ENCODE measurements at regions of chr1 and their contacts with region 1.

Region 1: DNA sequence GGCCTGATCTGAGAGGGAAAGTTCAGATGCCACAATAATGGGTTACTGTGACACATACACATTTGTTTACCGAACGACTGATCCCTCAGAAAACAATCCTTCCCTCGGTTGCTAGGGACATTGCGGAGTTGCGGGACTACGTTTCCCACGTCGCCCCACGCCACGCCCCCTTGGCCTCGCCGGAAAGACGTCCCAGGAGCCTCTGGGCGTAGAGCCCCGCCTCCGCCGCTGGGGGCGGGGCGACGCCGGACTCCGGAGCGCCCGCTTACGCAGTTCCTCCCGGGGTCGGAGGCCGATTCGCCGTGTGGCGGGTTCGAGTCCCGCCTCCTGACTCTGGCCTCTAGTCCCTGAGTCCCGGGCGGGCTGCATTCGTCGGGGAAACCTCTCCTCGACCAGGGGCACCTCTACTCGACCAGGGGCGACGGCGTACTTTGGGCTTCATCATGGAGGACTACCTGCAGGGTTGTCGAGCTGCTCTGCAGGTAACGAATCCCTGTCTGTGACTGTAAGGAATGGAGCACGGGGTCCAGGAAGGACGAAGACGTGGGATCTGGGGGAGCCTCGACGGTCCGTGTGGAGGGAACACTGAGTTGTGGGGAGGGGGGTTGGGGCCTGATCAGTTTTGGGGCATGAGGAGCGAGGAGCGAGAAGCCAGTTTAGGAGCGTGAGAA is at the start of gene PRUNE1:
- DNase-seq: peak; percentile 99 to 100 (median 99)
- H3K4me3 ChIP-seq: peak within 1 kb of the TSS; percentile 73 to 88 (median 78)
- H3K4me3 Mint-ChIP-seq: peak within 1 kb of the TSS; percentile 97 to 98
- H3K27ac ChIP-seq: peak within 1 kb of the TSS; percentile 89 to 95
- H3K27ac Mint-ChIP-seq: peak within 1 kb of the TSS; percentile 98 to 99 (median 99)
- H3K4me1 ChIP-seq: peaks cover 53 to 59% of the 10 kb centered on the region in 2 donors
- H3K4me1 Mint-ChIP-seq: peaks cover 62% of the 10 kb centered on the region
- H3K27me3 ChIP-seq: no peaks in the 10 kb centered on the region
- H3K27me3 Mint-ChIP-seq: peaks cover 0 to 10% (median 0%) of the 10 kb centered on the region in 3 donors
- CTCF ChIP-seq: no peak
- polyA plus RNA-seq, gene PRUNE1: 8.4 to 22.8 (median 22.6) TPM

Region 2: GRCh38 chr1:150660584-150660983 is 347.7 kb before region 1 on chr1:
- intact Hi-C with region 1: no loop called
- DNase-seq: no peak
- H3K4me3 ChIP-seq: no peak overlapping the region
- H3K4me3 Mint-ChIP-seq: no peak overlapping the region
- H3K27ac ChIP-seq: no peak overlapping the region
- H3K27ac Mint-ChIP-seq: peak overlapping the region in 1 of 7 donors; percentile 62
- H3K4me1 ChIP-seq: no peaks in the 10 kb centered on the region
- H3K4me1 Mint-ChIP-seq: peaks cover 4% of the 10 kb centered on the region
- H3K27me3 ChIP-seq: no peaks in the 10 kb centered on the region
- H3K27me3 Mint-ChIP-seq: no peaks in the 10 kb centered on the region
- CTCF ChIP-seq: no peak

Region 3: GRCh38 chr1:150876119-150876454 is 132.2 kb before region 1 on chr1:
- intact Hi-C with region 1: loop called in 1 of 2 experiments (anchors 5 kb)
- DNase-seq: peak in 1 of 3 donors; percentile 24
- H3K4me3 ChIP-seq: peak overlapping the region; percentile 95 to 98 (median 98)
- H3K4me3 Mint-ChIP-seq: peak overlapping the region; percentile 86 to 93
- H3K27ac ChIP-seq: peak overlapping the region; percentile 81 to 91
- H3K27ac Mint-ChIP-seq: peak overlapping the region; percentile 90 to 97 (median 94)
- H3K4me1 ChIP-seq: peaks cover 35 to 42% of the 10 kb centered on the region in 2 donors
- H3K4me1 Mint-ChIP-seq: peaks cover 42% of the 10 kb centered on the region
- H3K27me3 ChIP-seq: no peaks in the 10 kb centered on the region
- H3K27me3 Mint-ChIP-seq: peaks cover 0 to 1% (median under 1%) of the 10 kb centered on the region in 3 donors
- CTCF ChIP-seq: no peak

Region 4: DNA sequence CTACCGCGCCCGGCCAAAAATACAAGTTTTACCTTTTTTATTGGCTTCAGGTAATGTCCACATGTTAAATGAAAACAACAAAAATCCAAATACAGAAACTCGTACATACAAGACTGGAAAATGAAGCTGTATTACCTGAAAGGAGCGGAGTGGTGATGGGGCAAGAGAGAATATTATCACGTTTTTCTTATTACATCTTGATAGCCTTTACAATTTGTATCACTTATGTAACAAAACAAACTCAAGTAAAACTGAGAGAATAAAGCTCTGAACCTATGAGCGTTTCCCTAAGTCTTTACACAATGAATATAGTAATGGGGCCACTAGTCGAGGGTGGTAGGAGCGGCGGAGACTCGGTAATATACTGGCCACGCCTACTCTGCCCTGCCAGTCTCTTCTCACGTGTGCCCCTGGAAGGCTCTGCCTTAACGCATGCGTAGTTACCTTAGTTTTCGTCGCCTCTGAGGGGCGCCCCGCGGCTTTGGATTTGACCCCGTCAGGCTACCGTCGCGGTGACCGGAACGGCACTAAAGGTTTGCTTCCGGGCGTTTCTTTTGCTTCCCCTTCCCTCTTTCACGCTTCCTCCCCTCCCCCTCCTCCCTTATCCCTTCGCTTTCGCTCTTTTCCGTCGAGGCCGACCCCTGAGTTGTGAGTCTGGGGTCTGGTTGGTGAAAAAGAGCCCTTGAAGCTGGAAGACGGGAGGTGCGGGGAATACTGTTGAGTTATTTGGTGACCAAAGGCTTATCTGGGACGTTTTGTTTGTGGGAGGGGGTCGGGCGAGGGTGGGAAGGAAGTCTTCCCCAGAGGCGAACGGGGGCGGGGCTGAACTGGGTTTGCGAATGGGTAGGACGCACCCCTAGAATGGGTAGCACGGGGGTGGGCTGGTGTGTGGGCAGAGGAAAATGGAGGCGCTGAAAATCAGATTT is 82.2 kb before region 1 on chr1 and contains the start of gene SETDB1:
- intact Hi-C with region 1: loop called in 1 of 2 experiments (anchors 5 kb)
- DNase-seq: peak; percentile 96 to 99 (median 98)
- H3K4me3 ChIP-seq: peak within 1 kb of the TSS; percentile 71 to 88 (median 75)
- H3K4me3 Mint-ChIP-seq: peak within 1 kb of the TSS; percentile 94 to 95
- H3K27ac ChIP-seq: peak within 1 kb of the TSS; percentile 83 to 92
- H3K27ac Mint-ChIP-seq: peak within 1 kb of the TSS; percentile 97 to 99 (median 99)
- H3K4me1 ChIP-seq: peaks cover 19 to 27% of the 10 kb centered on the region in 2 donors
- H3K4me1 Mint-ChIP-seq: peaks cover 27% of the 10 kb centered on the region
- H3K27me3 ChIP-seq: no peaks in the 10 kb centered on the region
- H3K27me3 Mint-ChIP-seq: peaks cover 0 to 3% (median 1%) of the 10 kb centered on the region in 3 donors
- CTCF ChIP-seq: no peak
- polyA plus RNA-seq, gene SETDB1: 13.9 to 69.4 (median 15.5) TPM

Region 5: DNA sequence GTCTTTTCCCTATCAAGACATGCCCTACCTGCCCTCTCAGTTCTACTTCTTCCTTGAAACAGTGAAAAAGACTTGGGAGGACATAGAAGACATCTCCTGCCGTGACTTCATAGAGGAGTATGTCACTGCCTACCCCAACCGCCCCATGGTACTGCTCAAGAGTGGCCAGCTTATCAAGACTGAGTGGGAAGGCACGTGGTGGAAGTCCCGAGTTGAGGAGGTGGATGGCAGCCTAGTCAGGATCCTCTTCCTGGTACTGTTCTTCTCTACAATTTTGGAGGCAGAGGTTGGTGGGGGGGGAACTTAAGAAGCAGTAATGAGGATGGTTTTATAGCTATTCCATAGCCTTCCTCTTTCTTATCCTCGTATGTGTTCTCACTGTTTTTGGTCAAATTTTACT is 63.5 kb before region 1 on chr1:
- intact Hi-C with region 1: no loop called
- DNase-seq: no peak
- H3K4me3 ChIP-seq: no peak overlapping the region
- H3K4me3 Mint-ChIP-seq: no peak overlapping the region
- H3K27ac ChIP-seq: no peak overlapping the region
- H3K27ac Mint-ChIP-seq: peak overlapping the region in 1 of 7 donors; percentile 21
- H3K4me1 ChIP-seq: no peaks in the 10 kb centered on the region
- H3K4me1 Mint-ChIP-seq: no peaks in the 10 kb centered on the region
- H3K27me3 ChIP-seq: no peaks in the 10 kb centered on the region
- H3K27me3 Mint-ChIP-seq: no peaks in the 10 kb centered on the region
- CTCF ChIP-seq: no peak

Region 6: GRCh38 chr1:150979092-150980056 is 29.0 kb before region 1 on chr1:
- intact Hi-C with region 1: loop called in 1 of 2 experiments (anchors 5 kb)
- DNase-seq: peak; percentile 81 to 92 (median 83)
- H3K4me3 ChIP-seq: peak overlapping the region; percentile 49 to 79 (median 67)
- H3K4me3 Mint-ChIP-seq: peak overlapping the region; percentile 74 to 93
- H3K27ac ChIP-seq: peak overlapping the region; percentile 81 to 87
- H3K27ac Mint-ChIP-seq: peak overlapping the region; percentile 91 to 100 (median 99)
- H3K4me1 ChIP-seq: peaks cover 48 to 50% of the 10 kb centered on the region in 2 donors
- H3K4me1 Mint-ChIP-seq: peaks cover 46% of the 10 kb centered on the region
- H3K27me3 ChIP-seq: no peaks in the 10 kb centered on the region
- H3K27me3 Mint-ChIP-seq: no peaks in the 10 kb centered on the region
- CTCF ChIP-seq: peak; percentile 100

Region 7: DNA sequence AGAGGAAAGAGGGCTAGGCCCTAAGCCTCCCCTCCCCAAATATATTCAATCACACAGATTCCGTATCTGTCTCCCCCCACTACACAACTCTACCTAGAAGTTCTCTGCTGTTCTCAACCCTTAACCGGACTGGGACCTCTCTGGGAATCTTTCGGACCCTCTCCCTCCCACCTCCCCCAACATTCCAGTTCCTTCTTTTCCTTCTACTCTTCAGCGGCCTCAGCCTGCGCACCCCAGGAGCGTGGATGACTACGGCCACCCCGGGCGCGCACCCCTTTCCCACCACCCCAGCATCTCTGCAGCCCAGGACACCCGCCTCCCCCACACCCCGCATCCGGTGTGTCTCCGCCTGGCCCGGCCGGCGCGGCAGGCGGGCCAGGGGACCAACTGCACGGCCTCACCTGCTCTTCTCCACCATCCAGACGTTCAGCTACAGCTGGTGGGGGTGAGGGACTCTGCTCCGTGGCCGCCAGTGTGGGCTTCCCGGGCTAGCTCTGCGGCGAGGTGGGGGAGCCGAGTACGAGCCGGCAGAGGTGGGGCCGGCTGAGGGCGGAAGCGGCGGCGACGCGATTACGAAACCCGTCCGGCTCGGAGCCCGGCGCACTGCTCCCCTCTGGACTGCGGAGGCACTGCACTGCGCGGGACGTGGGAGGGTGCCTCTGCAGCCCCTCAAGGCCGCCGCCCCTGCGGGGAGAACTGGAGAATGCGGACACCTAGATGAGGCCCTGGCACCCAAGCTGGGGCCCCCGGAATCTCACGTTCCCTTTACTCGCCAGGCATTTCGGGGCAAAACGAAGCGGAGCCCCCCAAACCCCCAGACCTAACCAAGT is 51.0 kb after region 1 on chr1 and contains the start of gene CDC42SE1:
- intact Hi-C with region 1: loop called in 1 of 2 experiments (anchors 5 kb)
- DNase-seq: peak; percentile 84 to 90 (median 89)
- H3K4me3 ChIP-seq: peak within 1 kb of the TSS; percentile 79 to 99 (median 99)
- H3K4me3 Mint-ChIP-seq: peak within 1 kb of the TSS; percentile 99
- H3K27ac ChIP-seq: peak within 1 kb of the TSS; percentile 93 to 94
- H3K27ac Mint-ChIP-seq: peak within 1 kb of the TSS; percentile 98 to 100 (median 99)
- H3K4me1 ChIP-seq: peaks cover 42 to 50% of the 10 kb centered on the region in 2 donors
- H3K4me1 Mint-ChIP-seq: peaks cover 51% of the 10 kb centered on the region
- H3K27me3 ChIP-seq: no peaks in the 10 kb centered on the region
- H3K27me3 Mint-ChIP-seq: peaks cover 2 to 5% (median 3%) of the 10 kb centered on the region in 3 donors
- CTCF ChIP-seq: peak; percentile 98
- polyA plus RNA-seq, gene CDC42SE1: 62.1 to 302 (median 75.7) TPM

Region 8: GRCh38 chr1:151085953-151086559 is 77.7 kb after region 1 on chr1:
- intact Hi-C with region 1: no loop called
- DNase-seq: no peak
- H3K4me3 ChIP-seq: no peak overlapping the region
- H3K4me3 Mint-ChIP-seq: no peak overlapping the region
- H3K27ac ChIP-seq: no peak overlapping the region
- H3K27ac Mint-ChIP-seq: no peak overlapping the region
- H3K4me1 ChIP-seq: peaks cover 9 to 11% of the 10 kb centered on the region in 2 donors
- H3K4me1 Mint-ChIP-seq: peaks cover 9% of the 10 kb centered on the region
- H3K27me3 ChIP-seq: no peaks in the 10 kb centered on the region
- H3K27me3 Mint-ChIP-seq: no peaks in the 10 kb centered on the region
- CTCF ChIP-seq: no peak

Region 9: DNA sequence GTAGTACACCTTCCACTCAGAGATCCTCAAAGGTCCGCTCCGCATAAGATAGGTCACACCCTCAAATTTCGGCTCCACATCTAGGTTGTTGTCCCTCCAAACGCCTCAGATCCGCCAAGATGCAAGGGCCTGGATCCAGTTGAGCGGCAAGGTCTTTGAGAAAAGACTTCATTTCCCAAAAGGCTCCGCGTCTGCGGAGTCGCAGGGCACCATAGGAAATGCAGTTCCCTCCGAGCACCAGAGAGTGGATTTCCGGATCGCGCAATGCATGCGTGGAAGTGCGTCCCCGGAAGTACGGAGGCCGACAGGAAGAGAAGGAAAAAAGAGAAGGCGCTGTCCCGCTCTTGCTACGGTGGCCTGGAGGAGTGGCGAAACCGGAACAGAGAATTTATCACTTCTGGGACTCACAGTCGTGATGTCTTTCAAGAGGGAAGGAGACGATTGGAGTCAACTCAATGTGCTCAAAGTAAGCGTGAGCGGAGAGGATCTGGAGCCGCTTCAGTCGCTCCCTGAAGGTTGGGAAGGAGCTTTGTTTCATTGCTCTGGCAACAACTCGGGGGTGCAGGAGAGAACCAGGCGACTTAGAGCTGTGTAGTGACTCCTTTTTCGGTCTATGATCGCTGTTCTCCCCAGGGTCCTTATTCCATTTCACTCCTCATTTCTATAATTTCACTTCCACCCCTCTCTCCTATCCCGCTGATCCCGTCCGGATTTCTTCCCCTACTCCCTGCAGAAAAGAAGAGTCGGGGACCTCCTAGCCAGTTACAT is 157.6 kb after region 1 on chr1 and contains the starts of genes LYSMD1 and SCNM1:
- intact Hi-C with region 1: loop called (anchors 5 to 10 kb)
- DNase-seq: peak; percentile 96 to 99 (median 98)
- H3K4me3 ChIP-seq: peak within 1 kb of the TSS; percentile 71 to 91 (median 81)
- H3K4me3 Mint-ChIP-seq: peak within 1 kb of the TSS; percentile 95 to 97
- H3K27ac ChIP-seq: peak within 1 kb of the TSS; percentile 56 to 83
- H3K27ac Mint-ChIP-seq: peak within 1 kb of the TSS; percentile 89 to 95 (median 93)
- H3K4me1 ChIP-seq: peaks cover 27 to 31% of the 10 kb centered on the region in 2 donors
- H3K4me1 Mint-ChIP-seq: peaks cover 44% of the 10 kb centered on the region
- H3K27me3 ChIP-seq: no peaks in the 10 kb centered on the region
- H3K27me3 Mint-ChIP-seq: peaks cover 0 to 1% (median 0%) of the 10 kb centered on the region in 3 donors
- CTCF ChIP-seq: no peak
- polyA plus RNA-seq, gene LYSMD1: 0.16 to 0.24 TPM in 2 of 3 donors, not detected in the other
- polyA plus RNA-seq, gene SCNM1: 74.9 to 110 (median 103) TPM